Transverse colon (tissue), 4 donors: ENCODE measurements at regions of chr10 and their contacts with region 1.

Region 1: GRCh38 chr10:133329491-133330202 is 7.0 kb downstream of the CALY start:
- DNase-seq: peak; percentile 89
- H3K4me3 ChIP-seq: peak overlapping the region in 3 of 4 donors; percentile 23 to 42 (median 24)
- H3K27ac ChIP-seq: no peak overlapping the region
- H3K4me1 ChIP-seq: peaks cover 12 to 24% (median 20%) of the 10 kb centered on the region in 4 donors
- H3K27me3 ChIP-seq: peaks cover 82% of the 10 kb centered on the region
- CTCF ChIP-seq: peak; percentile 85 to 97 (median 97)
- EP300 ChIP-seq: no peak
- POLR2A ChIP-seq: no peak

Region 2: GRCh38 chr10:132627666-132628531 is 701.7 kb before region 1 on chr10:
- in situ Hi-C with region 1: no loop called
- intact Hi-C with region 1: no loop called
- DNase-seq: no peak
- H3K4me3 ChIP-seq: no peak overlapping the region
- H3K27ac ChIP-seq: peak overlapping the region; percentile 83 to 95 (median 89)
- H3K4me1 ChIP-seq: peaks cover 25 to 63% (median 41%) of the 10 kb centered on the region in 4 donors
- H3K27me3 ChIP-seq: no peaks in the 10 kb centered on the region
- CTCF ChIP-seq: no peak
- EP300 ChIP-seq: no peak
- POLR2A ChIP-seq: no peak

Region 3: GRCh38 chr10:133139551-133140065 is 190.0 kb before region 1 on chr10:
- in situ Hi-C with region 1: loop called in 1 of 4 experiments (anchors 10 kb)
- intact Hi-C with region 1: no loop called
- DNase-seq: no peak
- H3K4me3 ChIP-seq: no peak overlapping the region
- H3K27ac ChIP-seq: no peak overlapping the region
- H3K4me1 ChIP-seq: peaks cover 0 to 5% (median 2%) of the 10 kb centered on the region in 4 donors
- H3K27me3 ChIP-seq: peaks cover 40% of the 10 kb centered on the region
- CTCF ChIP-seq: no peak
- EP300 ChIP-seq: no peak
- POLR2A ChIP-seq: no peak

Region 4: DNA sequence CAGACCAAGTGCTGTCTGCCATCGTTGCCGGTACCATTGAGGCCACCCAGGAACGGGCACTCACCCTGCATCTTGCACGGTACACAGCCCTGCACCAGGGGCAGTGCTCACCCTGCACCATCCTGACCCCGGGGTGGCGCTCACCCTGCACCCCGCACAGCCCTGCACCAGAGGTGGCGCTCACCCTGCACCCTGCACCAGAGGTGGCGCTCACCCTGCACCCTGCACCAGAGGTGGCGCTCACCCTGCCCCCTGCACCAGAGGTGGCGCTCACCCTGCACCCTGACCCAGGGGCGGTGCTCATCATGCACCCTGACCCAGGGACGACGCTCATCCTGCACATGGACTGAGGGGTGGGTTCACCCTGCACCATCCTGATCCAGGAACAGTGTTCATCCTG is 27.4 kb before region 1 on chr10:
- in situ Hi-C with region 1: no loop called
- intact Hi-C with region 1: loop called (anchors 1 kb)
- DNase-seq: no peak
- H3K4me3 ChIP-seq: no peak overlapping the region
- H3K27ac ChIP-seq: no peak overlapping the region
- H3K4me1 ChIP-seq: peaks cover 2 to 13% (median 3%) of the 10 kb centered on the region in 4 donors
- H3K27me3 ChIP-seq: no peaks in the 10 kb centered on the region
- CTCF ChIP-seq: no peak
- EP300 ChIP-seq: no peak
- POLR2A ChIP-seq: no peak